ENCODE measurements at regions of chr3 and their contacts with region 1.

Region 1: GRCh38 chr3:32947789-32948238 is 3.6 kb upstream of the CCR4 start:
- DNase-seq: peak; percentile 89 to 94 (median 90)
- H3K4me3 ChIP-seq: no peak overlapping the region
- H3K27ac ChIP-seq: no peak overlapping the region
- H3K4me1 ChIP-seq: peaks cover 0 to 27% (median 14%) of the 10 kb centered on the region in 4 experiments
- H3K27me3 ChIP-seq: no peaks in the 10 kb centered on the region

Region 2: GRCh38 chr3:32733631-32734229 is 214.1 kb before region 1 on chr3:
- CTCF ChIA-PET with region 1: no interaction called
- POLR2A ChIA-PET with region 1: no interaction called
- DNase-seq: peak; percentile 55 to 72 (median 69)
- H3K4me3 ChIP-seq: no peak overlapping the region
- H3K27ac ChIP-seq: no peak overlapping the region
- H3K4me1 ChIP-seq: no peaks in the 10 kb centered on the region
- H3K27me3 ChIP-seq: no peaks in the 10 kb centered on the region

Region 3: GRCh38 chr3:32882603-32883025 is 65.2 kb before region 1 on chr3:
- CTCF ChIA-PET with region 1: no interaction called
- POLR2A ChIA-PET with region 1: no interaction called
- DNase-seq: no peak
- H3K4me3 ChIP-seq: no peak overlapping the region
- H3K27ac ChIP-seq: no peak overlapping the region
- H3K4me1 ChIP-seq: peaks cover 0 to 3% (median 0%) of the 10 kb centered on the region in 4 experiments
- H3K27me3 ChIP-seq: no peaks in the 10 kb centered on the region

Region 4: GRCh38 chr3:32968166-32968919 is 20.5 kb after region 1 on chr3:
- CTCF ChIA-PET with region 1: interaction called, 12 read pairs
- POLR2A ChIA-PET with region 1: no interaction called
- DNase-seq: no peak
- H3K4me3 ChIP-seq: no peak overlapping the region
- H3K27ac ChIP-seq: no peak overlapping the region
- H3K4me1 ChIP-seq: peaks cover 0 to 2% (median 0%) of the 10 kb centered on the region in 4 experiments
- H3K27me3 ChIP-seq: peaks cover 0 to 3% (median 0%) of the 10 kb centered on the region in 5 experiments

Region 5: DNA sequence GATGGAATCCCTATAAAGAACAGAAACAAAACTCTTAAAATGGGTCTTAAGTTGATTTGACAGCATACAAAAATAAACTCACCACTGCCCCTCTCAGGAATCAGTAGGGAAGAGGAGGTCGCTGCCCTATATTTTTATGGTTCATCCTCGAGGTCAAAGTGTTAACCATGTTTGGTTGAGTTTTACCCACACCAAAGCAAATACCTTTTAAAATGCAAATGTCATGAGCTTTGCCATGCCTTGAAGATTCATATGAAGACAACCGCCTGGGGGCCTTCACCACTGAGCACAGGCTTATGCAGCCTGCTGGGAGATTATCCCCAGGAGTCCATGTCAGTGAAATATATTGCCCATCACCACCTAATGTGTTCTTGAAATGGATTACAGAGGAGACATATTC is 83.0 kb after region 1 on chr3:
- CTCF ChIA-PET with region 1: interaction called, 24 read pairs
- POLR2A ChIA-PET with region 1: no interaction called
- DNase-seq: peak; percentile 9 to 12 (median 10)
- H3K4me3 ChIP-seq: no peak overlapping the region
- H3K27ac ChIP-seq: no peak overlapping the region
- H3K4me1 ChIP-seq: no peaks in the 10 kb centered on the region
- H3K27me3 ChIP-seq: no peaks in the 10 kb centered on the region

Region 6: DNA sequence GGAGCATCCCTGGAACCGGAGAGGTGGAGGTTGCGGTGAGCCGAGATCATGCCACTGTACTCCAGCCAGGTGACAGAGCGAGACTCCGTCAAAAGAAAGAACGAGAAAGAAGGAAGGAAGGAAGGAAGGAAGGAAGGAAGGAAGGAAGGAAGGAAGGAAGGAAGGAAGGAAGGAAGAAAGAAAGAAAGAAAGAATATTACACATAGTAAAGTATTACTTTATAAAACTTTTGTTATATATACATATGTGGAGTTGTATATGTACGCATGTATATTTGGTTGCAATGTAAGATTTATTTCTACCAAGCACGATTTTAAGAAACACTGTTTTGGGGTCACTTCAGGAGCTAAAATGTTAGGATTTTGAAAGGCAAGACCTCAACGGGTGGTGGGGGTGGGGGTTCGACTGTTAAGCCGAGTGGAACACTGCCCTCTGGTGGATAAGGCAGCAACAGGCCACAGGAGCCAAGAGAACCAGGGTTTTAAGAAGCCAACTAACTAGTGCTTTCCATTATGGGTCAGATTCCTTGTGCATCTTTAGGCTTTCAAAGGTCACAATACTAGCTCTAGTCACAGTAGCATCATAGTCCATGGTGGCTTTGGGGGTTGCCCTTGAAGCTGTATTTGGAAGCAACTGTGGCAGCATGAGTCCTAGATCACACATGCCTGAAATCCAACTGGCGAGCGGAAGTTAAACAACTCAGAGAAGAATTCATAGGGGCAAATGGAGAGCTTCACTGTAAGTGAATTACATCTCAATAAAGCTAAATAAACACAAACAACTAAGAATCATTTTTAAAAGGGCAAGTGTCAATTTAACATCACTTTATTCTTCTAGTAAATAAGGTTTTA is 126.6 kb after region 1 on chr3:
- CTCF ChIA-PET with region 1: interaction called, 162 read pairs
- POLR2A ChIA-PET with region 1: no interaction called
- DNase-seq: peak; percentile 73 to 87 (median 81)
- H3K4me3 ChIP-seq: no peak overlapping the region
- H3K27ac ChIP-seq: no peak overlapping the region
- H3K4me1 ChIP-seq: peaks cover 0 to 7% (median 0%) of the 10 kb centered on the region in 4 experiments
- H3K27me3 ChIP-seq: no peaks in the 10 kb centered on the region

Region 7: GRCh38 chr3:33131331-33132018 is 183.7 kb after region 1 on chr3:
- CTCF ChIA-PET with region 1: interaction called, 13 read pairs
- POLR2A ChIA-PET with region 1: no interaction called
- DNase-seq: peak; percentile 56 to 75 (median 68)
- H3K4me3 ChIP-seq: no peak overlapping the region
- H3K27ac ChIP-seq: no peak overlapping the region
- H3K4me1 ChIP-seq: no peaks in the 10 kb centered on the region
- H3K27me3 ChIP-seq: no peaks in the 10 kb centered on the region

Region 8: GRCh38 chr3:33372218-33373081 is 424.6 kb after region 1 on chr3:
- CTCF ChIA-PET with region 1: interaction called, 17 read pairs
- POLR2A ChIA-PET with region 1: no interaction called
- DNase-seq: peak; percentile 50 to 80 (median 67)
- H3K4me3 ChIP-seq: peak overlapping the region in 1 of 7 experiments; percentile 6
- H3K27ac ChIP-seq: no peak overlapping the region
- H3K4me1 ChIP-seq: no peaks in the 10 kb centered on the region
- H3K27me3 ChIP-seq: no peaks in the 10 kb centered on the region

Measured in common myeloid progenitor, CD34-positive (primary cell).